HEK293T (cell line): ENCODE measurements at regions of chr5 and their contacts with region 1.

Region 1: DNA sequence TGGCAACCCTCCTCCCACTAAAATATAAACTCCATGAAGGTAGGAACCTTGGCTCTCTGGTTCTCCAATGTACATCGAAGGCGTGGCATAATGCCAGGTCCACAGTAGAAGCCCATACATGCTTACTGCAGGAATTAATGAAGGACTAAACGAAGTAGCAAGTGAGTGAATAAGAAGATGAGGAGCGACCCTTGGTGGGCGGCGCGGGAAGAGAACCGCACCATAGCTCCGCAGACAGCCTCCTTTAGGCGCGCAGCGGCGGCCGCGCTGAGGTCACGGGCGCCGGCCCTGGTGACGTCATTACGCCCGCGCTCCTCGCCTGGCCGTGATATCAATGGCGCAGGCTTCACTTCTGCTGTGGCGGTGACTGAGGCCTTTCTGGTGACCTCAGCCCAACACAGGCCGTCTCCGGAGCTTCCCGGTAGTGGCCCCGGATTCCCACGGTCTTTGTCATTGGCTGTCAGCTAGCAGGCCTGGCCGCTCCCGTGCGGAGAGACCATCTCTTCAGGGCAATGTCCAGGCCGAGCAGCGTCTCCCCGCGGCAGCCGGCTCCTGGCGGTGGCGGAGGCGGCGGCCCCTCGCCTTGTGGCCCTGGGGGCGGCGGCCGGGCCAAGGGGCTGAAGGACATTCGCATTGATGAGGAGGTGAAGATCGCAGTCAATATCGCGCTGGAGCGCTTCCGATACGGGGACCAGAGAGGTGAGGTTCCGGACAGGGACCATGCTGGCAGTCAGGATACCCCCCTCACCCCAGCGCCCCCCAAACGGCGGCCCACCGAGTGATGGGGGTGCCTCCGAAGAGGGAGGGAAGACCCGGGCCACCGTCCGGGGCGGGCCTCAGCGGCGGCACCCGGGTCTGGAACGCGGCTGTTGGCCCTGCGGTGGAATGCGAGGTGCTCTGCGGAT is at the start of gene YTHDC2:
- DNase-seq: peak; percentile 90

Region 2: DNA sequence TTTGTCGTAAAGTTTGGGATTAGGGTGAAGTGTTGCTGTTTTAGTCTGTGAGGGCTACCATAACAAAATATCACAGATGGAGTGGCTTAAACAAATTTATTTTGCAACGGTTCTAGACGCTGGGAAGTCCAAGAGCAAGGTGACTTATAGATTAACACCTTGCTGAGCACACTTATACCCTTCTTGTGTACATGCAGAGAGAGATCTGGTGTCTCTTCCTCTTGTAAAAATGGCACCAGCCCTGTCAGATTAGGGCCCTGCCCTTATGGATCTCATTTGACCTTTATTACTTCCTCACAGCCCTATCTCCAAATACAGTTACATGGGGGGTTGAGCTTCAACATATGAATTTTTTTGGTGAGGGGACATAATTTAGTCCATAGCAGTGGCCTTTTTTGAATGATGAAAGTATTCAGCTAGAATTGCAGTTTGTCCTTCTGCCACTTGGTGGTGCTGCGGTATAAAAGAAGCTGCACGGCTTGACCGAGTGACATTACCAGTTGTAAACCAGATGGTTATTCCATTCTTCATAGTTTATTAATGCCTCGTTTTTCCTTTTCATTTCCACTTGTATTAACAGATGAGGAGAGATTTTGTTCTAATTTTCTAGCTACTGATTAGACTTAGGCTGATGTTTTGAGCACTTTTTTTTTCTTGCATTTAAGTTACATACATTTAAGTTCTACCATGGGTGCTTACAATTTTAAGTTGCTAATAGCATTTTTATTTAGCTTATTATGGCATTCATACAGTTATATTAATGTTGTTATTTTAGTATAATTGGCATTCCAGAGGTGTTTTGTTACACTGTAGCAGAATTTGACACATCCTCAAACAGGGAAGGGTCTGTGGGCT is 517.6 kb before region 1 on chr5:
- CTCF ChIA-PET with region 1: interaction called, 10 read pairs
- POLR2A ChIA-PET with region 1: no interaction called
- DNase-seq: peak; percentile 70

Region 3: GRCh38 chr5:113336975-113337374 is 176.7 kb before region 1 on chr5:
- CTCF ChIA-PET with region 1: interaction called, 12 read pairs
- POLR2A ChIA-PET with region 1: interaction called, 7 read pairs
- DNase-seq: peak; percentile 50

Region 4: GRCh38 chr5:113378959-113379541 is 134.6 kb before region 1 on chr5:
- CTCF ChIA-PET with region 1: interaction called, 18 read pairs
- POLR2A ChIA-PET with region 1: interaction called, 9 read pairs
- DNase-seq: peak; percentile 66

Region 5: GRCh38 chr5:113487781-113488644 is 25.6 kb before region 1 on chr5 and contains the start of gene MCC:
- CTCF ChIA-PET with region 1: interaction called, 6 read pairs
- POLR2A ChIA-PET with region 1: interaction called, 10 read pairs
- DNase-seq: peak; percentile 85

Region 6: GRCh38 chr5:113502073-113502472 is 11.6 kb before region 1 on chr5:
- CTCF ChIA-PET with region 1: no interaction called
- POLR2A ChIA-PET with region 1: no interaction called
- DNase-seq: no peak